Activated CD4-positive, alpha-beta T cell treated with anti-CD3 and anti-CD28 coated beads for 36 hours (primary cell): ENCODE measurements at regions of chr6 and their contacts with region 1.

Region 1: DNA sequence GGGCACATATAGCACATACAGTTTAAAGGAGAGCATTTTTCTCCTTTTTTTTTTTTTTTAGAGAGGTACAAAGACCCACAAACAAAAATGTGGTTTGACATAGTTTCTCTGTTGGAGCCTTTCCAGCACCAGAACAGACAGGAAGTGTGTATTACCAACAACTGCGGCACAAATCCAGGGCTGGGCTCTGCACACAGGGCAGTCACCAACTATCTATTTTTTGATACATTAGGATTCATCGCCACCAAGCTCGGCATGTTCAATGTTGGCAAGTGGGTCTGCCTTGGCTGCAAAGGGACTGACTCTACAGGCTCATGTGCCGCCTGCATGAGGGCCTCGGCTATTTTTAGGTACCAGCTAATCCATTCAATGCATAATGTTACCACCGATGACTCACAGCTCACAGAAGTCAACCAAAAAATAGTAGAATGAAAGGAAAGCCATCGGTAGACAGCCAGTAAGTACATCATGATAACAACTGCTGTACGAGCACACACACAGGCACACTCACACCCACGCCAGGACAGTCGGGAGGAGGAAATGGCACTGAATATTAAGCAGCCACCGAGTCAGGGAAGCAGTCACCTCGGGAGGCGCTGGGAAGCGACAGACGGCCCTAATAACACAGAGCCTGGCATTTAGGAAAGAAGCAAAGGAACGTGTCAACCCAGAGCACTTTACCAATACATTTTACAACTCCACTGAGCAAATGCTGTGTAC is 81.6 kb downstream of the GMPR start:
- DNase-seq: peak; percentile 80
- ATAC-seq: peak; percentile 62
- H3K4me3 Mint-ChIP-seq: peak overlapping the region; percentile 67
- H3K27ac Mint-ChIP-seq: peak overlapping the region; percentile 93
- H3K4me1 Mint-ChIP-seq: peaks cover 76% of the 10 kb centered on the region
- H3K27me3 Mint-ChIP-seq: no peaks in the 10 kb centered on the region

Region 2: DNA sequence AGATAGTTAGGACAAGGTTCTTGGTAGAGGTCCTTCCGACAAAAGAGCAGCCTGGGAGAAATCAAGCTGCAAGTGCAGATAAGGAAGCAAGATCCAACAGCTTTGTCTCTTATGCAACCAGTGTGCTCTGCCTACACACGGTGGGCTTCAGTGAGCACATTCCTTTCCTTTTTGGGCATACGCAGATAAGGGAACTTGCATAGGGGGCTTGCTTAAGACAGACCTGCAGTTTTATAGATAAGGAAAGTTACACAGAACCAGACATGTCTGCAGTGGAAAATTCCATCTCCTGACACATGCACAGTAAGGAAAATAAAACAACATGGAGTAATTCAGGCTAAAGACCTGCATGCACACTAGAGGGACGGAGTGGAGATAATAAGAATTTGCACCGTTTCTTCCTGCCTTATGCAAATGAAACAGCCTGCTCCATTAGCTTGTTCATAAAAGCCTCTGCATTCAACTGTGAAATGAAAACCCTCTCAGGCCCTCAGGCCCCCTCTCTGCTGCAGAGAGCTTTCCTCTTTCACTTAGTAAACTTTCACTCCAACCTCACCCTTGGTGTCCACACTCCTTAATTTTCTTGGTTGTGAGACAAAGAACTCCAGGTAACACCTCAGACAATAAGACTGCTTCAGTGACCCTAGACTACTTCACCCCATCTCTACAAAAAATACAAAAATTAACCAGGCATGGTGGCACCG is 288.5 kb before region 1 on chr6:
- CTCF ChIA-PET with region 1: no interaction called
- POLR2A ChIA-PET with region 1: no interaction called
- intact Hi-C with region 1: no loop called
- DNase-seq: no peak
- ATAC-seq: no peak
- H3K4me3 Mint-ChIP-seq: no peak overlapping the region
- H3K27ac Mint-ChIP-seq: no peak overlapping the region
- H3K4me1 Mint-ChIP-seq: peaks cover 5% of the 10 kb centered on the region
- H3K27me3 Mint-ChIP-seq: peaks cover 6% of the 10 kb centered on the region

Region 3: DNA sequence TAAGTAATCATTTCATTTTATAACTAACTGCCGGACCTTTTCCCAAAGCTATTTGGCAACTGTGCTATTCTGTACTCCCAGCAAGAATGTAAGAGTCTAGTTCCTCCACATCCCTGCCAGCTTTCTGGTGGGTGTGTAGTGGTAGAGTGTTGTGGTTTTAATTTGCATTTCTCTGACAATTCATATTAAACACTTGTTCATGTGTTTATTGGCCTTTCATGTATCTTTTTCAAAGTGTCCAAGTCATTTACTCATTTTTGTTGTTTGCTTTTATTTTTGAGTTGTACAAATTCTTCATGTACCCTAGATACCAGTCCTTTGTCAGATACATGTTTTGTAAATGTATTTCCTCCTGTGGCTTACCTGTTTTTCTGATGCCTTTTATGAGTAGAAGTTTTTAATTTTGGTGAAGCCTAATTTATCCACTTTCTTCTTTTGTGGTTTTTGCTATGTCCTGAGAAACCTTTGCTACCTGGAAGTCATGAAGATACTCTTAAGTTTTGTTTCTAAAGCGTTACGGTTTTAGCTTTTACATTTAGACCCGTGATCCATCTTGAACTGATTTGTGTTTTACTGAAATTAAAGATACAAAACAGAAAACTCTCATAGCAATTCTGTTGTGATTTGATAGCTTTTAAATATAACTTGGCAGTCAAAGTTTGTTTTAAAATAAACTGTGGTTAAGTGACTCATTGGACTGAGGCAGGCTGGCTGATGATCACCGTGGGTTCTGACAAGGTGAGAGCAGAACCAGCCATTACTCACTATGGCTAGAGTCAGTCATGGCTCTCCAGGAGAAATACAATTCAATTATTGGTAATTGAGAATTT is 183.1 kb before region 1 on chr6:
- CTCF ChIA-PET with region 1: no interaction called
- POLR2A ChIA-PET with region 1: interaction called, 3 read pairs
- intact Hi-C with region 1: loop called in 1 of 2 experiments (anchors 5 kb)
- DNase-seq: peak; percentile 75
- ATAC-seq: peak; percentile 89
- H3K4me3 Mint-ChIP-seq: peak overlapping the region; percentile 56
- H3K27ac Mint-ChIP-seq: peak overlapping the region; percentile 86
- H3K4me1 Mint-ChIP-seq: peaks cover 79% of the 10 kb centered on the region
- H3K27me3 Mint-ChIP-seq: no peaks in the 10 kb centered on the region

Region 4: GRCh38 chr6:16257999-16258708 is 61.8 kb before region 1 on chr6:
- CTCF ChIA-PET with region 1: no interaction called
- POLR2A ChIA-PET with region 1: no interaction called
- intact Hi-C with region 1: no loop called
- DNase-seq: peak; percentile 37
- ATAC-seq: peak; percentile 81
- H3K4me3 Mint-ChIP-seq: no peak overlapping the region
- H3K27ac Mint-ChIP-seq: no peak overlapping the region
- H3K4me1 Mint-ChIP-seq: peaks cover 5% of the 10 kb centered on the region
- H3K27me3 Mint-ChIP-seq: no peaks in the 10 kb centered on the region

Region 5: DNA sequence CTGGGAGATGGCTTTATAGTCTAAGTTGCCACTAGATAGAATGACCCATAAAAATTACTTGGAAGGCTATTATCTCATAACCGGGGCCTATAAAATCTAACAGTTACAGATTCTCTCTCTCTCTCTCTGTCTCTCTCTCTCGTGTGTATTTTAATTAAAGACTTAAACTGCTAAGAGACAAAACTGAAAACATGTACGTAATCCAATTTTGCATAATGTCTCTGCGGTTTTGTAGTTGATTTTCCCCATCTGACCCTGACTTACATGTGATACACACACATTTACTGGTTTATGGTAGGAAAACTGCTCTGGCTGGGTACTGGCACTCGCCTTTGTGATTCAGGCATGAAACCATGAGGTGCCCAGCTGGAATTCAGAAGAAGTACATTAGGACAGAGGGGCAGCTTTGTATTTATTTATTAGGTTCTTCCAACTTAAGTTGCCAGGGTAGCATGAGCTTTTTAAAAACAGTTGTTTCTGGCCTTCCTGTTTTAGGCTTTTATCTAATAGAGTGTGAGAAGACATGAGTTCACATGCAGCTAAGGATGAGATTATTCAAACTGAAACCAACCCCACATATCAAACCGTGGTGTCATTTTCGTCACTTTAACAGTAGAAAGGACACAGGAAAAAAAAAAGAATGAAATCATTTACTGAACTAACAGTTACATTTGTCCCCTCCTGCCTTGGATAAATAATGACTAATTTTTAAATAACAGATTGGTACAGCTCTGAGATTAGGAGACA is 100.9 kb after region 1 on chr6:
- CTCF ChIA-PET with region 1: interaction called, 3 read pairs
- POLR2A ChIA-PET with region 1: interaction called, 3 read pairs
- intact Hi-C with region 1: loop called in 1 of 2 experiments (anchors 5 kb)
- DNase-seq: peak; percentile 66
- ATAC-seq: peak; percentile 82
- H3K4me3 Mint-ChIP-seq: peak overlapping the region; percentile 58
- H3K27ac Mint-ChIP-seq: peak overlapping the region; percentile 94
- H3K4me1 Mint-ChIP-seq: peaks cover 53% of the 10 kb centered on the region
- H3K27me3 Mint-ChIP-seq: no peaks in the 10 kb centered on the region

Region 6: GRCh38 chr6:16591396-16592222 is 271.6 kb after region 1 on chr6:
- CTCF ChIA-PET with region 1: interaction called, 3 read pairs
- POLR2A ChIA-PET with region 1: interaction called, 7 read pairs
- intact Hi-C with region 1: loop called in 1 of 2 experiments (anchors 5 kb)
- DNase-seq: peak; percentile 61
- ATAC-seq: peak; percentile 87
- H3K4me3 Mint-ChIP-seq: no peak overlapping the region
- H3K27ac Mint-ChIP-seq: peak overlapping the region; percentile 78
- H3K4me1 Mint-ChIP-seq: peaks cover 19% of the 10 kb centered on the region
- H3K27me3 Mint-ChIP-seq: no peaks in the 10 kb centered on the region

Region 7: GRCh38 chr6:16690608-16691198 is 370.7 kb after region 1 on chr6:
- CTCF ChIA-PET with region 1: no interaction called
- POLR2A ChIA-PET with region 1: no interaction called
- intact Hi-C with region 1: loop called (anchors 1 to 10 kb)
- DNase-seq: peak; percentile 73
- ATAC-seq: peak; percentile 75
- H3K4me3 Mint-ChIP-seq: peak overlapping the region; percentile 34
- H3K27ac Mint-ChIP-seq: peak overlapping the region; percentile 88
- H3K4me1 Mint-ChIP-seq: peaks cover 88% of the 10 kb centered on the region
- H3K27me3 Mint-ChIP-seq: no peaks in the 10 kb centered on the region

Region 8: DNA sequence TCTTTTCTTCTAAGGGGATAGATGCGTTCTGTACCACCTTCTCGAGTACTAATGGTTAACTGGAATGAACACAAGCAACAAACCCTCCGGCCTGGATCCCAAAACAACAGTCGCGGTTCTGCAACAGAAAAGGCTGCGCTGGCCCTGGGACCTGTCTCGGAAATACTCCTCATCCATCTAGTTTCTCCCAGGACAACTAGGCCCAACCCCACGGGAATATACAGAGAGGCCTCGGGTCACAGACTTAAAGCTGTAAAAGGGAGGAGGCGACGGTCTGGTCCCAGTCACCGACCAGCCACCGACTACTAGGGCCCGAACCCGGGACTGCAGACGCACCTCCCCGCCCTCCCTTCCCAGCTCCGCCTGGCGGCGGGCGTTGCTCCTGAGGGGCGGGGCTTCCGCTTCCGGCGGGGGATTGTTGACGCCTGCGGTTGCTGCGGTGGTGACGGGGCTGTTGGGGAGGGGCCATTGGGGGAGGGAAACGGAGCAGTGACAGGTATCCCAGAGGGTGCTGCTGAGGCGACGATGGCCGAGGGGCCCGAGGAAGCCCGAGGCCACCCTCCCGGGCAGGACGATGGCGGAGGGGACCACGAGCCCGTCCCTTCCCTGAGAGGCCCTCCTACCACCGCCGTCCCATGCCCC is 1280.0 kb after region 1 on chr6 and contains the start of gene FAM8A1:
- CTCF ChIA-PET with region 1: interaction called, 3 read pairs
- POLR2A ChIA-PET with region 1: no interaction called
- intact Hi-C with region 1: loop called in 1 of 2 experiments (anchors 5 kb)
- DNase-seq: peak; percentile 98
- ATAC-seq: peak; percentile 83
- H3K4me3 Mint-ChIP-seq: peak within 1 kb of the TSS; percentile 75
- H3K27ac Mint-ChIP-seq: peak within 1 kb of the TSS; percentile 66
- H3K4me1 Mint-ChIP-seq: peaks cover 41% of the 10 kb centered on the region
- H3K27me3 Mint-ChIP-seq: no peaks in the 10 kb centered on the region
- total RNA-seq, gene FAM8A1: 3.3 to 4.1 TPM